ENCODE measurements at regions of chr16 and their contacts with region 1.

Region 1: DNA sequence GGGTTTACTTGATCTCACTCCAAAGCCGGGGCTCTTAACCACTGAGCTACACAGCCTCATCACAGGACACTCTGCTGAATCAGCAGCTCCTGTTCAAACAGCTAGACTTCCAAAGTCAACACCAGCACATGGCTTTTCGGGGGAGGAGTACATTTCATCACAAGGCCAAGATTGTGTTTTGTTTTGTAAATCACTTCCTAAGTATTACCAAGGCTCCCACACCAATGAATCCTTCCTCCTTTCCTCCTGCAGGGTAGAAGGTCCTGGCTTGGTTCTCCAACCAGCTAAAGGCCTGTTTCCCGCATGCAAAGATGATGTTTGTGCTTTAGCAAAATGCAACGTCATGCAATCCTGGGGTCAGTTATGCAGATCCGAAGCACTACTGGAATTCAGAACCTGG is 152.5 kb downstream of the XYLT1 start:
- DNase-seq: no peak
- H3K4me3 ChIP-seq: no peak overlapping the region
- CTCF ChIP-seq: no peak

Region 2: GRCh38 chr16:17277977-17278381 is 40.3 kb before region 1 on chr16:
- in situ Hi-C with region 1: loop called (anchors 5 kb)
- DNase-seq: no peak
- H3K4me3 ChIP-seq: no peak overlapping the region
- CTCF ChIP-seq: peak; percentile 56